Activated T-helper 2 cell treated with anti-CD3 and anti-CD28 coated beads, Interferon-gamma antibody, Interleukin-2, Interleukin-4, amounts not matched to agents 10 μg/mL and 5 μg/mL and 100 μg/mL, durations not matched to agents 14 hours and 24 hours and 36 hours (primary cell): ENCODE measurements at regions of chr11 and their contacts with region 1.

Region 1: DNA sequence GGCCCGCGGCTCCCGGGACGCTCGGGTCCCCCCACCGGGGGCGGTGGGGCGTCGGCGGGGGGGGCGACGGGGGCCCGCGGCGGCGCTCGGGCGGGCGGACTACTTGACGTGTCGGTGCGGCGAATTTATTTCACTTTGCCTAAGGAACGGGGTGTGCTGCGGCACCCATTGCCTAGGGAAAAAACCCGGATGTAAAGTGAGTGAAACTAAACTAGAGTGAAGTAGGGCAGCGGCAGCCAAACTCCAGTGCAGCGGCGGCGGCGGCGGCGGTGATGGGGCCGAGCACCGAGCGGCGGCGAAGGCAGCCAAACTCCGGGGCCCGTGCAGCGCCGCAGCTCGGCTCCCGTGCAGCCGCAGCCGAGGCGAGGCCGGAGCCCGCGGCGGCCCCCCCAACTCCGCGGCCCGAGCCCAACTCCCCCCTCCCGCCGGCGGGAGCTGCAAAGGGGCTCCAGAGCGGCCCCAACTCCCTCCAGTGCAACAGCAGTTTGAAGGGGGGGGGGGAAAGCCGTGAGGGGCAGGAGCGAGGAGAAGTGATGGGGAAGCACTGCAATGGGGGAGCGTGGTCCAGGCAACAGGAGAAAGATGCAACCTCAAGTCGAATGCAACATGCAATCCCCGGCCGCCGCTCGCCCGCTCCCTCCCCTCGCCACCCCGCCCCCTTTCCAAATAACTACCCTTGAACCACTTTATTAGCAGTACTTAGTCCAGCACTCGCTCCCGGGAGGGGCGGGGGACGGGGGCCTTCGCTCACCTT is 647 bp upstream of the PHF21A start:
- DNase-seq: peak; percentile 79
- H3K4me3 Mint-ChIP-seq: peak overlapping the region; percentile 83
- H3K27ac Mint-ChIP-seq: peak overlapping the region; percentile 82
- H3K4me1 Mint-ChIP-seq: peaks cover 37% of the 10 kb centered on the region
- H3K27me3 Mint-ChIP-seq: no peaks in the 10 kb centered on the region

Region 2: GRCh38 chr11:45468262-45468856 is 653.5 kb before region 1 on chr11:
- intact Hi-C with region 1: no loop called
- DNase-seq: no peak
- H3K4me3 Mint-ChIP-seq: no peak overlapping the region
- H3K27ac Mint-ChIP-seq: no peak overlapping the region
- H3K4me1 Mint-ChIP-seq: no peaks in the 10 kb centered on the region
- H3K27me3 Mint-ChIP-seq: peaks cover 3% of the 10 kb centered on the region

Region 3: GRCh38 chr11:45817191-45817590 is 304.7 kb before region 1 on chr11:
- intact Hi-C with region 1: no loop called
- DNase-seq: no peak
- H3K4me3 Mint-ChIP-seq: no peak overlapping the region
- H3K27ac Mint-ChIP-seq: no peak overlapping the region
- H3K4me1 Mint-ChIP-seq: peaks cover 2% of the 10 kb centered on the region
- H3K27me3 Mint-ChIP-seq: no peaks in the 10 kb centered on the region

Region 4: DNA sequence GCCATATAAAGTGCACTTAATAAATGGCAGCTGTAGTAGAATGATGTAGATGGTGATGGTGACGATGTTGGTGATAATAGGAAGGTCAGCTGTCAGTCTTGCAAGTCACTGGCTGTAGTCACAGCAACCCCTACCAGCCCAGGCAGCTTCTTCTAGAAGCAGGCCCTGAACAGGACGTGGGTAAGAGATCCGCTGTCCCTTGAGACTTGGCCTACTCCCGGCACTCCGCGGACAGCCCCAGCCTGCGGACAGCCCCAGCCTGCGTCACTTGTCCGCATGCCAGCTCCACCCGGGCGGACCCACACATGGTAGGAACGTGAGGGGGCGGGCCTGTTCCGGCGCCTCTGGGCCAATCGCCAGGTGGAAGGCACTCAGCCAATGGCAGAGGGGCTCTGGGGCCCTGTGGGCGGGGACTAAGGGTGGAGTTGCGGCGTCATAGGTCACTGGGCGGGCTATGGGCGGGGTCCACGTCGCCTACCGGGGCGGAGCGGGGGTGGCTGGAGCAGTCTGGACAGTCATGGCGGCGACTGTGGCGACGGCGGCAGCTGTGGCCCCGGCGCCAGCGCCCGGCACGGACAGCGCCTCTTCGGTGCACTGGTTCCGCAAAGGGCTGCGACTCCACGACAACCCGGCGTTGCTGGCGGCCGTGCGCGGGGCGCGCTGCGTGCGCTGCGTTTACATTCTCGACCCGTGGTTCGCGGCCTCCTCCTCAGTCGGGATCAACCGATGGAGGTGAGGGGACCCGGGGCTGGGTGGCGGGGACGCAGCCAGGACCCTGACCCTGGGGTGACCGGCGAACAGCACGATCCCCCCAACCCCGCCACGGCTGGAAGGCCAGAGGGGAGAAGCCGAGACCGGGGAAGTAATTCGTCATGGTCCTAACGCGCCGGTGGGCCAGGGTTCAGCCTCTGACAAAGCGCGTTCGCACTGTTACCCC is 274.7 kb before region 1 on chr11 and contains the start of gene CRY2:
- intact Hi-C with region 1: loop called (anchors 10 kb)
- DNase-seq: peak; percentile 96
- H3K4me3 Mint-ChIP-seq: peak within 1 kb of the TSS; percentile 84
- H3K27ac Mint-ChIP-seq: peak within 1 kb of the TSS; percentile 87
- H3K4me1 Mint-ChIP-seq: peaks cover 47% of the 10 kb centered on the region
- H3K27me3 Mint-ChIP-seq: peaks cover 12% of the 10 kb centered on the region
- total RNA-seq, gene CRY2: 21.5 and 24.0 TPM in 2 replicates

Region 5: DNA sequence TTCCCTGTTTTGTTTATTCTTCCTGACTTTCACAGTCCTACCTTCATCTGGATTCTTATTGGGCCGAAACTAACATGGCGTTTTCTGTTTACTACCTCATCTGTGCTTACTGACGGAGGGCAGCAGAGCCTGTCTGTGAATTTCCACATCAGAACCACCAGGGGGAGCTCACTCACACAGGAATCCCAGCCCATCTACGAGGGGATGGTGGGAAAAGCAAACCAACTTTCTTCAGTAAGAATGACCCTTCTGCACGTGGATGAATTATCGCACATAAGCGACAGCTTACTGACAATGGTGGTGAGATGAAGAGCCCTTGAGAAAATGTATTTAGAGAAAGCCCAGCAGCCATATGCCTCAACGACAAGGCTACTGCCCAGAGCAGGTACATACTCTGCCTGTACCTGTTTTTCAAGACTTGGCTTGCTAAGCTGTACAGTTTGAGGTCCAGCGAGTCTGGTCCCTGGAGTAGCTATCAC is 157.0 kb before region 1 on chr11:
- intact Hi-C with region 1: loop called (anchors 10 kb)
- DNase-seq: peak; percentile 43
- H3K4me3 Mint-ChIP-seq: no peak overlapping the region
- H3K27ac Mint-ChIP-seq: no peak overlapping the region
- H3K4me1 Mint-ChIP-seq: peaks cover 9% of the 10 kb centered on the region
- H3K27me3 Mint-ChIP-seq: no peaks in the 10 kb centered on the region

Region 6: DNA sequence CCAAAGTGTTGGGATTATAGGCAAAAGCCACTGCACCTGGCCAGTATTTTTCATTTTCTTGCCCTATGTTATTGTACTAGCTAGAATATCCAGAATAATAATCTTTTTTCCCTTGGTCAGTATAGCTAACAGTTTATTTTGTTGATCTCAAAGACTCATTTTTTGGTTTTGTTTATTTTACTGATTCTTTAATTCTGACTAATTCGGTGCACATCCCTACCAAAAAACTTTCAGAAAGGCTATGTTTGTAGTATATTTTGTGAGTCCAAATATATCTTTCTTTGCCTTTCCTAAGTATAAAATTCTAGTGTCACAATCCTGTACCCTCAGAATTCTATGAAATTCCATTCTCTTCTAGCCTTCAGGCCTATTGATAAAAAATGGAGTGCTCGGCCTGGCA is 84.9 kb before region 1 on chr11:
- intact Hi-C with region 1: no loop called
- DNase-seq: no peak
- H3K4me3 Mint-ChIP-seq: no peak overlapping the region
- H3K27ac Mint-ChIP-seq: no peak overlapping the region
- H3K4me1 Mint-ChIP-seq: peaks cover 17% of the 10 kb centered on the region
- H3K27me3 Mint-ChIP-seq: no peaks in the 10 kb centered on the region

Region 7: GRCh38 chr11:46238967-46239800 is 117.3 kb after region 1 on chr11:
- intact Hi-C with region 1: loop called (anchors 5 kb)
- DNase-seq: peak; percentile 78
- H3K4me3 Mint-ChIP-seq: peak overlapping the region; percentile 59
- H3K27ac Mint-ChIP-seq: no peak overlapping the region
- H3K4me1 Mint-ChIP-seq: peaks cover 36% of the 10 kb centered on the region
- H3K27me3 Mint-ChIP-seq: peaks cover 21% of the 10 kb centered on the region

Region 8: GRCh38 chr11:46277622-46278386 is 155.9 kb after region 1 on chr11 and contains the start of gene CREB3L1:
- intact Hi-C with region 1: no loop called
- DNase-seq: no peak
- H3K4me3 Mint-ChIP-seq: no peak within 1 kb of the TSS
- H3K27ac Mint-ChIP-seq: no peak within 1 kb of the TSS
- H3K4me1 Mint-ChIP-seq: peaks cover 2% of the 10 kb centered on the region
- H3K27me3 Mint-ChIP-seq: peaks cover 49% of the 10 kb centered on the region
- total RNA-seq, gene CREB3L1: not detected in 2 replicates

Region 9: GRCh38 chr11:46346886-46347636 is 225.2 kb after region 1 on chr11 and contains the start of gene DGKZ:
- intact Hi-C with region 1: loop called (anchors 5 kb)
- DNase-seq: peak; percentile 90
- H3K4me3 Mint-ChIP-seq: peak within 1 kb of the TSS; percentile 84
- H3K27ac Mint-ChIP-seq: peak within 1 kb of the TSS; percentile 83
- H3K4me1 Mint-ChIP-seq: peaks cover 52% of the 10 kb centered on the region
- H3K27me3 Mint-ChIP-seq: peaks cover 9% of the 10 kb centered on the region
- total RNA-seq, gene DGKZ: 82.3 and 86.1 TPM in 2 replicates